ENCODE measurements at regions of chr4 and their contacts with region 1.

Region 1: GRCh38 chr4:153466081-153466948 is at the start of gene TMEM131L:
- DNase-seq: peak; percentile 93
- H3K4me3 ChIP-seq: peak within 1 kb of the TSS; percentile 61 to 95 (median 88)
- H3K27ac ChIP-seq: peak within 1 kb of the TSS; percentile 82 to 89 (median 88)
- H3K4me1 ChIP-seq: peaks cover 27 to 64% (median 54%) of the 10 kb centered on the region in 4 donors
- H3K27me3 ChIP-seq: no peaks in the 10 kb centered on the region
- CTCF ChIP-seq: peak; percentile 10 to 33 (median 14)
- EP300 ChIP-seq: no peak
- POLR2A ChIP-seq: peak; percentile 20
- total RNA-seq, gene TMEM131L: 10.3 to 16.3 (median 12.1) TPM

Region 2: GRCh38 chr4:153083447-153083947 is 382.8 kb before region 1 on chr4:
- intact Hi-C with region 1: no loop called
- DNase-seq: no peak
- H3K4me3 ChIP-seq: no peak overlapping the region
- H3K27ac ChIP-seq: no peak overlapping the region
- H3K4me1 ChIP-seq: peaks cover 5 to 20% (median 13%) of the 10 kb centered on the region in 4 donors
- H3K27me3 ChIP-seq: no peaks in the 10 kb centered on the region
- CTCF ChIP-seq: peak; percentile 59 to 68 (median 64)
- EP300 ChIP-seq: no peak
- POLR2A ChIP-seq: no peak

Region 3: GRCh38 chr4:153344131-153345010 is 121.9 kb before region 1 on chr4 and contains the start of gene MND1:
- intact Hi-C with region 1: loop called (anchors 10 kb)
- DNase-seq: no peak
- H3K4me3 ChIP-seq: peak within 1 kb of the TSS; percentile 82 to 94 (median 94)
- H3K27ac ChIP-seq: peak within 1 kb of the TSS in 3 of 4 donors; percentile 48 to 65 (median 60)
- H3K4me1 ChIP-seq: peaks cover 13 to 20% (median 16%) of the 10 kb centered on the region in 4 donors
- H3K27me3 ChIP-seq: no peaks in the 10 kb centered on the region
- CTCF ChIP-seq: peak; percentile 78 to 98 (median 93)
- EP300 ChIP-seq: no peak
- POLR2A ChIP-seq: no peak
- total RNA-seq, gene MND1: 0.99 TPM in 1 of 4 donors, not detected in the others

Region 4: DNA sequence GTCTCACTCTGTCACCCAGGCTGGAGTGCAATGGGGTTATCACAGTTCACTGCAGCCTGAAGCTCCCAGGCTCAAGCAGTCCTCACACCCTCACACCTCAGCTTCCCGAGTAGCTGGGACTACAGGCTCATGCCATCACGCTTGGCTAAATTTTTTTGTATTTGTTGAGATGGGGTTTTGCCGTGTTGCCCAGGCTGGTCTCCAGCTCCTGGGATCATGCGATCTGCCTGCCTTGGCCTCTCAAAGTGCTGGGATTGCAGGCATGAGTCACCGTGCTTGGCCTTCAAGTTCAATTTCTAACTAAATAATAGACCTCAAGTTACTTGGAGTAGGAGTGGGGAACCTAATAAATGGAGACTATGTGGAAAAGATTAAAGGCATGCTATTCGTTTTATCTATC is 72.9 kb before region 1 on chr4:
- intact Hi-C with region 1: no loop called
- DNase-seq: no peak
- H3K4me3 ChIP-seq: no peak overlapping the region
- H3K27ac ChIP-seq: no peak overlapping the region
- H3K4me1 ChIP-seq: peaks cover 0 to 5% (median 0%) of the 10 kb centered on the region in 4 donors
- H3K27me3 ChIP-seq: no peaks in the 10 kb centered on the region
- CTCF ChIP-seq: no peak
- EP300 ChIP-seq: no peak
- POLR2A ChIP-seq: no peak

Region 5: GRCh38 chr4:153555730-153556433 is 89.6 kb after region 1 on chr4:
- intact Hi-C with region 1: loop called (anchors 5 kb)
- DNase-seq: peak; percentile 93
- H3K4me3 ChIP-seq: peak overlapping the region in 1 of 4 donors; percentile 3
- H3K27ac ChIP-seq: peak overlapping the region; percentile 63 to 77 (median 73)
- H3K4me1 ChIP-seq: peaks cover 18 to 55% (median 43%) of the 10 kb centered on the region in 4 donors
- H3K27me3 ChIP-seq: no peaks in the 10 kb centered on the region
- CTCF ChIP-seq: no peak
- EP300 ChIP-seq: no peak
- POLR2A ChIP-seq: no peak

Region 6: GRCh38 chr4:153781717-153782416 is 315.6 kb after region 1 on chr4:
- intact Hi-C with region 1: no loop called
- DNase-seq: no peak
- H3K4me3 ChIP-seq: no peak overlapping the region
- H3K27ac ChIP-seq: no peak overlapping the region
- H3K4me1 ChIP-seq: no peaks in the 10 kb centered on the region
- H3K27me3 ChIP-seq: peaks cover 0 to 2% (median 0%) of the 10 kb centered on the region in 4 donors
- CTCF ChIP-seq: no peak
- EP300 ChIP-seq: no peak
- POLR2A ChIP-seq: no peak

Measured in esophagus muscularis mucosa (tissue), 4 donors.